CD4-positive, alpha-beta memory T cell (primary cell): ENCODE measurements at regions of chrX and their contacts with region 1.

Region 1: GRCh38 chrX:120499301-120500072 is 30.4 kb upstream of the LAMP2 start:
- DNase-seq: no peak
- H3K4me3 ChIP-seq: no peak overlapping the region
- H3K4me3 Mint-ChIP-seq: no peak overlapping the region
- H3K27ac ChIP-seq: no peak overlapping the region
- H3K27ac Mint-ChIP-seq: no peak overlapping the region
- H3K4me1 ChIP-seq: peaks cover 3% of the 10 kb centered on the region
- H3K4me1 Mint-ChIP-seq: peaks cover 4 to 10% (median 5%) of the 10 kb centered on the region in 4 donors
- H3K27me3 ChIP-seq: no peaks in the 10 kb centered on the region
- H3K27me3 Mint-ChIP-seq: no peaks in the 10 kb centered on the region

Region 2: DNA sequence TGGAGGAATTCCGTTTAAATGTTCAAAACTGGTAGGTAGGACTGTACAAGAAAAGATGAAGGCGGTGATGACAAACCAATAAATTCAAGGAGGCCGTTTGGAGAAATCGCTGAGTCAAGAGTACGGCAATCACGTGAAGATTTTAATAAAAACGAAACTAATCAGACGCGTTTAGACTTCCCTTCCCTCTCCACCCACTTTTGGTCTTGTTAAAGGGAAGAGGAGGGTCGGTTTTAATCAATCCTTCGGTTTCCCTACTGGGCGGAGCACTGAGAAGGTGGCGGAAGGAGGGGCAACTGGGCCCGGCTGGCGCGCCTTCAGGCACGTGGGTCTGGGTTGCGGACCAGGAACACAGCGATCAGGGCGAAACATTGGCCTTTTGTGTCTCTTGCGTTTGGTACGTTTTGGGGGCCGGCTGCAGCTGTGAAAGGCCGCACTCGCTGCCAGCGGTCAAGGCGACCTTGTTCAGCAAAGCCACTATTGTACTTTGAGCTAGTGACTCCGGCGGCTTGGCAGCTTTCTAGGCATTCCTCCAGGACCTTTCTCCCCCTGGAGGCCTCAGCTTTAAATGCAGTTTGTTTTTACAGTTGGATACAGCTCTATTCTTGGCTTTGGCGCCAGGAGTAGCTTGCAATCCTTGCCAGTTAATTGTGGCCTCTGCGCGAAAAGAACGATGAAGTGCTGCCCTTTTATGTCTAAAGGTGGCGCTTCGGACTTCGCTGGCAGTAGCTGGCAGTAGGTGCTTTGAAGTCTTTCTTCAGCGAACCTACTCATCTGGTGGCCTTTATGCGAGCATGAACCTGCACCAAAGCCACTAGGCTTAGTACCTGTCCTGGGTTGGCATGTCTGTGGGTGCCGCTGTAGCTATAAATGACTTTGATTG is 13.6 kb before region 1 on chrX:
- CTCF ChIA-PET with region 1: no interaction called
- POLR2A ChIA-PET with region 1: interaction called, 4 read pairs
- intact Hi-C with region 1: loop called (anchors 1 kb)
- DNase-seq: peak; percentile 52 to 76 (median 58)
- H3K4me3 ChIP-seq: peak overlapping the region; percentile 73 to 88
- H3K4me3 Mint-ChIP-seq: peak overlapping the region; percentile 90 to 96 (median 92)
- H3K27ac ChIP-seq: peak overlapping the region; percentile 68
- H3K27ac Mint-ChIP-seq: peak overlapping the region; percentile 95 to 97 (median 96)
- H3K4me1 ChIP-seq: peaks cover 35% of the 10 kb centered on the region
- H3K4me1 Mint-ChIP-seq: peaks cover 12 to 28% (median 22%) of the 10 kb centered on the region in 4 donors
- H3K27me3 ChIP-seq: no peaks in the 10 kb centered on the region
- H3K27me3 Mint-ChIP-seq: no peaks in the 10 kb centered on the region

Region 3: GRCh38 chrX:120617996-120618630 is 118.6 kb after region 1 on chrX:
- CTCF ChIA-PET with region 1: no interaction called
- POLR2A ChIA-PET with region 1: no interaction called
- intact Hi-C with region 1: no loop called
- DNase-seq: no peak
- H3K4me3 ChIP-seq: no peak overlapping the region
- H3K4me3 Mint-ChIP-seq: peak overlapping the region in 1 of 8 donors; percentile 6
- H3K27ac ChIP-seq: no peak overlapping the region
- H3K27ac Mint-ChIP-seq: no peak overlapping the region
- H3K4me1 ChIP-seq: no peaks in the 10 kb centered on the region
- H3K4me1 Mint-ChIP-seq: peaks cover 0 to 4% (median under 1%) of the 10 kb centered on the region in 4 donors
- H3K27me3 ChIP-seq: no peaks in the 10 kb centered on the region
- H3K27me3 Mint-ChIP-seq: no peaks in the 10 kb centered on the region

Region 4: GRCh38 chrX:120664081-120664480 is 164.6 kb after region 1 on chrX:
- CTCF ChIA-PET with region 1: interaction called, 25 read pairs
- POLR2A ChIA-PET with region 1: no interaction called
- intact Hi-C with region 1: loop called (anchors 1 kb)
- DNase-seq: peak in 4 of 5 donors; percentile 13 to 39 (median 20)
- H3K4me3 ChIP-seq: no peak overlapping the region
- H3K4me3 Mint-ChIP-seq: no peak overlapping the region
- H3K27ac ChIP-seq: no peak overlapping the region
- H3K27ac Mint-ChIP-seq: no peak overlapping the region
- H3K4me1 ChIP-seq: no peaks in the 10 kb centered on the region
- H3K4me1 Mint-ChIP-seq: peaks cover 0 to 2% (median 0%) of the 10 kb centered on the region in 4 donors
- H3K27me3 ChIP-seq: no peaks in the 10 kb centered on the region
- H3K27me3 Mint-ChIP-seq: no peaks in the 10 kb centered on the region

Region 5: DNA sequence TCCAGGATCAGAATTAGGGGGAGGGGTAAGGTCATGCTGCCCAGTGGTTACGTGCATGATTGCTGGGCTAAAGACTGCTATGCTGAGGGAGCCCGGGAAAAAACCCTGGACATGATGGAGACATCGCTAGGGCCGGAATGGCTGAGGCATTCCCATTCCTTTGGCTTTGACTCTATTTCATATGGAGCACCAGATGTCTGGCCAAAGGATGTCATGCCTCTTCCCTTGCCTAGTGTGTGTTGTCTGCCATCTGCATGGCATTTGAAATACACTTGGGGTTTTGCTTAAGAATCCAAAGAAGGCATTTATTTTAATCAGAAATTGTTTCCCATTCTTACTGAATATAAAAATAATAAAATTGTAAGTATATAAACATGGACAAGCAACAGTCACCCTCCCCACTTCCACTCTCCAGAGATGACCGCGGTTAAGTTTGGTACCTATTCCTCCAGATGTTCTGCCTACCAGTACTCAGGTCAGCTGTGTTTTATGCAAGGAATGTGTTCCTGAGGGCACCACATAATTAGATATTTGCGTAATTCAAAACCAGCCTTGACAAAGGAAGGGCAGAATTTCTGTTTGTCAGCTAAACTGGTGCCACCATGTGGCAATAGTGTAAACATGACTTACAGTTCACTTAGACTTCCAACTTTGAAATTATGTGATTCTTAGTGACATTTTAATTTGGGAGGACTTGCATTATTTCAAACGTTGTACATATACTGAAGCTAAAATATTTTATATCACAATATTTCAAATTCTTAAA is 270.3 kb after region 1 on chrX:
- CTCF ChIA-PET with region 1: no interaction called
- POLR2A ChIA-PET with region 1: no interaction called
- intact Hi-C with region 1: loop called (anchors 1 kb)
- DNase-seq: peak in 1 of 5 donors; percentile 14
- H3K4me3 ChIP-seq: no peak overlapping the region
- H3K4me3 Mint-ChIP-seq: no peak overlapping the region
- H3K27ac ChIP-seq: no peak overlapping the region
- H3K27ac Mint-ChIP-seq: peak overlapping the region in 1 of 7 donors; percentile 20
- H3K4me1 ChIP-seq: no peaks in the 10 kb centered on the region
- H3K4me1 Mint-ChIP-seq: peaks cover 0 to 2% (median 0%) of the 10 kb centered on the region in 4 donors
- H3K27me3 ChIP-seq: no peaks in the 10 kb centered on the region
- H3K27me3 Mint-ChIP-seq: no peaks in the 10 kb centered on the region

Region 6: DNA sequence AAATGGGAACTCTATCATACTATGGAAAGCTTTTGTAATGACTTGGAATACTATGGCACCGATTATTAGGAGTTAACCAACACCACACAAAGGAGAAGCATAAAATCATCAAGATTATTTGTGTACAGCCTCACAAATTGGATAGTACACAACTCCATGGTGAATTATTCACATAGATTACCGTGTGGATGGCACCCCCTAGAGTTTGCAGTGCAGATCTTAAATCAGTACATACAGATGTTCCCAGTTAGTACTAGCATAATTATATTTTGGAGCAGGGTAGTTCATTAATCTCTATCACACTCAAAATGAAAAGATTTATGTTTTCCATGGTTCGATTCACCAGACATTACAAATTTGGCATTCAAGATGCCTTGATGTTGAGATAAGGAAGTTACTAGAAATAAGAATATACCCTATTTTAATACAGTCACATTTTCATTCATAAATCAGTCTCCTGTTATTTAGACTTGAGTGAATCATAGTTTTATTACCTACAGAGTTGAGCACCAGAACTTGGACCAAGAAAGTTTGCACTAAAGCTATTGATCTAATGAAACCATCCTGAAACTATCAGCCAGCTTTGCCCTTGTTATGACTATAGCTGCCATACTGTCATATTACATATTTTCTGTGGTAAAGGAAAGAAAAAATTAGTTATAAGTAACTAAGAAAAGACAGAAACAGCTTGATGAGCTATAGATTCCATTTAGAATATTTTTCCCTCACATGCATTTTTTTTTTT is 1079.7 kb after region 1 on chrX:
- CTCF ChIA-PET with region 1: no interaction called
- POLR2A ChIA-PET with region 1: no interaction called
- intact Hi-C with region 1: loop called (anchors 5 kb)
- DNase-seq: peak in 1 of 5 donors; percentile 12
- H3K4me3 ChIP-seq: no peak overlapping the region
- H3K4me3 Mint-ChIP-seq: no peak overlapping the region
- H3K27ac ChIP-seq: no peak overlapping the region
- H3K27ac Mint-ChIP-seq: no peak overlapping the region
- H3K4me1 ChIP-seq: no peaks in the 10 kb centered on the region
- H3K4me1 Mint-ChIP-seq: no peaks in the 10 kb centered on the region
- H3K27me3 ChIP-seq: no peaks in the 10 kb centered on the region
- H3K27me3 Mint-ChIP-seq: no peaks in the 10 kb centered on the region